ENCODE measurements at regions of chr14 and their contacts with region 1.

Region 1: DNA sequence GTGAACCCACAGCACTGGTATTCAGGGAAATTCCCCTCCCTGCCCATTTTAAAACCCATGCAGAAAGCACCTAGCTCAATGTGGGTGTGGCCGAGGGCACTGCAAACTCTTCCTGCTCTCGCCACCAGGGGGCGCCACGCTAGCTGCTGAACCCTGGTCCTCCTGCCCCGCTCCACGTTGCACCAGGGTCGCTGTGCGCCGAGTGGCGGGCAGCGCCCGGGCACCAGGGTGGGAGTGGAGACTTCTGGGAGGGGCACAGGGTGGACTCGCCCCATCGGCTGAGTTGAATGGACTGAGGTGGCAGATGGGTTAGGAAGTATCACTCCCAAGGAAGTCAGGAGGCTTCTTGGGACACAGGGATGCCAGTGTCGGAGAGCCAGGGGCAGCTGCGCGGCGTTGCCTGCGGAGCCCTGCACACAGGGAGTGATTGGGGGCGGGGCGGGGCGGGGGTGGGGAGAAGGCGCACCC is 48.1 kb upstream of the BCL11B start:
- DNase-seq: peak; percentile 59
- ATAC-seq: peak; percentile 76
- H3K4me3 ChIP-seq: no peak overlapping the region
- H3K27ac ChIP-seq: no peak overlapping the region
- H3K4me1 ChIP-seq: no peaks in the 10 kb centered on the region
- H3K27me3 ChIP-seq: peaks cover 4% of the 10 kb centered on the region; the same call in 1 of the 2 replicates
- CTCF ChIP-seq: peak; percentile 95

Region 2: GRCh38 chr14:99245564-99246511 is 74.3 kb before region 1 on chr14:
- CTCF ChIA-PET with region 1: no interaction called
- POLR2A ChIA-PET with region 1: no interaction called
- intact Hi-C with region 1: no loop called
- DNase-seq: no peak
- ATAC-seq: no peak
- H3K4me3 ChIP-seq: no peak overlapping the region
- H3K27ac ChIP-seq: no peak overlapping the region
- H3K4me1 ChIP-seq: no peaks in the 10 kb centered on the region
- H3K27me3 ChIP-seq: peaks cover 84% of the 10 kb centered on the region
- CTCF ChIP-seq: no peak

Region 3: DNA sequence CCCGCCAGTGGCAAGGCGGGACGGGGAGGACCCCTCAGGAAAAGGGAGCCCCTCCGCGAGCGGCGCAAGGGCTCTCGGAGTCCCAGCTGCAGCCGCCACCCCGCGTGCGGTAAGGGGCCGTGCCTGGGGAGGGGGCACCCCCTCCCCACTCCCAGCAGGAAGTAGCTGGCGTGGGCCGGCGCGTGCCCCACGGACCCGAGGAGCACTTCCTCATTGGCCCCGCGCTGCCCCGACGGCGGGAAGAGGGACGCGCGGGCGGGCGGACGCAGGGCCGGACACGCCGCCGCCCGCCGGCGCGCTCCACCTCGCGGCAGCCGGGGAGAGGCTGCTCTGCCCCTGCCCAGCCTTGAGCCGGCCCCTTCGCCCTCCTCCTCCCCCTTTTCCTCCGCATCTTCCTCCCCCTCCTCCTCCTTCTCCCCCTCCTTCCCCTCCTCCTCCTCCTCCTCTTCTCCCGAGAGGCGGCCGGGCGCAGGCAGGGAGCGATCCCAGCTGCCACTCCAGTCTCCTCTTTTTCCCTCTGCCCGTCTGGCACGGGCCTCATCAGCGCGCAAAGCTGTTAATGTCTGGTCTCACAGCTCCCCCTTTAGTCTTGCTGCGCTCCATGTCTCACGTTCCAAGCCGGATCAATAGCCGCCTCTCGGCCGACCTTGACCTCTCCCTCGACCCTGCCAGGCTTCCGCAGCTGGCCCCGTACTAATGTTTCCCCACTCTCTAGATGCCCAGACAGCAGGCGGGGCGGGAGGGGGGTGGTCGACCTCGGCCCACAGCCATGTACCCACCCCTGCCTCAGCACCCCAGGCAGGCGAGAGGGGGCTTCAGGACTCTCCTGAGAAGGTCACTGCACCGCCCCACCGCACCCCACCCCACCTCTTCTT is 45.6 kb before region 1 on chr14:
- CTCF ChIA-PET with region 1: interaction called, 14 read pairs
- POLR2A ChIA-PET with region 1: no interaction called
- intact Hi-C with region 1: no loop called
- DNase-seq: peak; percentile 55
- ATAC-seq: peak; percentile 62
- H3K4me3 ChIP-seq: peak overlapping the region; percentile 48
- H3K27ac ChIP-seq: no peak overlapping the region
- H3K4me1 ChIP-seq: peaks cover 8% of the 10 kb centered on the region; the same call in 1 of the 2 replicates
- H3K27me3 ChIP-seq: peaks cover 89% of the 10 kb centered on the region
- CTCF ChIP-seq: peak; percentile 36